Activated CD4-positive, alpha-beta T cell treated with anti-CD3 and anti-CD28 coated beads for 36 hours (primary cell): ENCODE measurements at regions of chrX and their contacts with region 1.

Region 1: DNA sequence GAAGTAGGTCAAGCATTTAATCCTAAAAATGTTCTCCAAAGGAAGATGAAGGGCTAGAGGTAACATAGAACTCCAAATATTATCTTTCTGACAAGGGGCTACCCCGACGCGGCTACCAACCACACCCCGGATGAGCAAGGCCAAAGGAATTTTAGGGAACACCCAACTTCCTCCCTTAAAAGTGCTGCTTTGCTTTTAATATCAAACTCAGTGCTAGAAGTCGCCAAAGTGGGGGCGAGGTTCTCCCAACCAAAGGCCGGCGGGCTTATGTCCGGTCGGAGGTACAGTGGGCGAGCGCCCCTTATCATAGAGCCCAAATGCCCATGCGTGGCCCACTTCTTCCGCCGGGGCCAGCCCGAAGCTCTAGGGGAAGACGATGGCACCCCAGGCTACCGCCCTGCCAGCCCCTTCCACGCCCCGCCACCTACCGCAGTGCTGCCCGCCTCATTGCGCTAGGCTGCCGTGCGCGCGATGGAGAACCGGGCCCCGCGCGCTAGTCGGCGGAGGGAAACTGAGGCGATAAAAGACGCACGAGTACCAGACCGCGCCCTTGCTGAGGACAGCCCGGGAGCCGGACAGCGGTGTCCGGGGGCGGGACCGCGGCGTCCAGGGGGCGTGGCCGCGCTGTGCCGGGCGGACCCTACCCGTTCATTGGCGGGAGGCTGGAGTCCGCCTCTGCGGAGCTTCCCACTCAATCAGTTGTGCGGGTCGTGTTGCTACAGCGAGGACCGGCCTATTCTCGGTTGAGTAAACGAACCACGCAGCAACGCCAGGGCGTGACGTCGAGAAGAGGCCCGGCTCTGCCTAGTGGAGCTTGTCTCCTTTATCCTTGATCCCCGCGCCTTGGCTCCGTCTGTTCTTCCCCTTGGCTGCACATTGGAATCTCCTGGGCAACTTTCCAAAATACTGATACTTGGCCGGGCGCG is at the start of gene ACOT9:
- DNase-seq: peak; percentile 84
- ATAC-seq: peak; percentile 96
- H3K4me3 Mint-ChIP-seq: peak within 1 kb of the TSS; percentile 83
- H3K27ac Mint-ChIP-seq: peak within 1 kb of the TSS; percentile 86
- H3K4me1 Mint-ChIP-seq: peaks cover 24% of the 10 kb centered on the region
- H3K27me3 Mint-ChIP-seq: no peaks in the 10 kb centered on the region
- total RNA-seq, gene ACOT9: 31.7 to 39.9 TPM

Region 2: DNA sequence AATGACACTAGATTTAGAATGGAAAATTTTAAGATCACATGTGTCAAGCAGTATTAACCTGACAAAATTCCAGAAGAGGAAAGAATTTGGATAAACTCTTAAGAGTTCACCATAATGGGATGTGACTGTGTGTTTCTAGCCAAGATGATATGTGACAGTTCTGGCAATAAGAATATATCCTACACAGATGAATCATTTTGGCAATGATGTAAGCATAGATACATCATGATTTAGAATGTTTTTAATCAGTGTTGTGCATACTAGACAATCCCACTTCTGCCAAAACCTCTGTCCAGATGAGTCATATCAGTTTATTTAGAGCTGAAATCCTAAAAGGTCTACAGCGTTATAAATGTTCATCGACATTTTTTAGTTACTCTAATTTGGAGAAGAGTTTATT is 359.5 kb before region 1 on chrX:
- CTCF ChIA-PET with region 1: no interaction called
- POLR2A ChIA-PET with region 1: no interaction called
- intact Hi-C with region 1: no loop called
- DNase-seq: no peak
- ATAC-seq: peak; percentile 53
- H3K4me3 Mint-ChIP-seq: no peak overlapping the region
- H3K27ac Mint-ChIP-seq: no peak overlapping the region
- H3K4me1 Mint-ChIP-seq: peaks cover 7% of the 10 kb centered on the region
- H3K27me3 Mint-ChIP-seq: peaks cover 7% of the 10 kb centered on the region

Region 3: GRCh38 chrX:23732704-23733103 is 10.3 kb before region 1 on chrX:
- CTCF ChIA-PET with region 1: no interaction called
- POLR2A ChIA-PET with region 1: interaction called, 4 read pairs
- intact Hi-C with region 1: loop called in 1 of 2 experiments (anchors 1 kb)
- DNase-seq: no peak
- ATAC-seq: peak; percentile 83
- H3K4me3 Mint-ChIP-seq: peak overlapping the region; percentile 39
- H3K27ac Mint-ChIP-seq: peak overlapping the region; percentile 89
- H3K4me1 Mint-ChIP-seq: peaks cover 36% of the 10 kb centered on the region
- H3K27me3 Mint-ChIP-seq: no peaks in the 10 kb centered on the region

Region 4: DNA sequence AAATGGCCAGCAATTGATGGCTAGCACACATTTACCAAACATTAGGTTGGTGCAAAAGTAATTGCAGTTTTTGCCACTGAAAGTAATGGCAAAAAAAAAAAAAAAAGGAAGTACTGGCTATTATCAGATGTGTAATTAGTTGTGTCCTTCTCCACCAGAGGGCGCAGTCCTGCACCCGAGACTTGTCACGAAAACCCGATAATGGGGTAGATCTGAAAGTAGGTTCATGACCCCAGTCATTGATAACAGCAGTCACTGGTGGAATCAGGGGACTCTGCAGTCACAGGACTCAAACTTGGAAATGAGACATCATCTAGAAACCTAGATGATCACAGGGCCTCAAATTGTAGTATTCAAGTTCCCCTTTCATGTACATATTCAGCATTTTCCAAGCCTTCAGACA is 13.2 kb after region 1 on chrX:
- CTCF ChIA-PET with region 1: interaction called, 3 read pairs
- POLR2A ChIA-PET with region 1: no interaction called
- intact Hi-C with region 1: loop called in 1 of 2 experiments (anchors 1 kb)
- DNase-seq: peak; percentile 71
- ATAC-seq: peak; percentile 79
- H3K4me3 Mint-ChIP-seq: no peak overlapping the region
- H3K27ac Mint-ChIP-seq: peak overlapping the region; percentile 37
- H3K4me1 Mint-ChIP-seq: peaks cover 8% of the 10 kb centered on the region
- H3K27me3 Mint-ChIP-seq: no peaks in the 10 kb centered on the region